Activated CD4-positive, alpha-beta T cell treated with anti-CD3 and anti-CD28 coated beads, Interleukin-2, amount 10 ng/mL, durations not matched to agents 24 days and 14 days (primary cell): ENCODE measurements at regions of chr13 and their contacts with region 1.

Region 1: DNA sequence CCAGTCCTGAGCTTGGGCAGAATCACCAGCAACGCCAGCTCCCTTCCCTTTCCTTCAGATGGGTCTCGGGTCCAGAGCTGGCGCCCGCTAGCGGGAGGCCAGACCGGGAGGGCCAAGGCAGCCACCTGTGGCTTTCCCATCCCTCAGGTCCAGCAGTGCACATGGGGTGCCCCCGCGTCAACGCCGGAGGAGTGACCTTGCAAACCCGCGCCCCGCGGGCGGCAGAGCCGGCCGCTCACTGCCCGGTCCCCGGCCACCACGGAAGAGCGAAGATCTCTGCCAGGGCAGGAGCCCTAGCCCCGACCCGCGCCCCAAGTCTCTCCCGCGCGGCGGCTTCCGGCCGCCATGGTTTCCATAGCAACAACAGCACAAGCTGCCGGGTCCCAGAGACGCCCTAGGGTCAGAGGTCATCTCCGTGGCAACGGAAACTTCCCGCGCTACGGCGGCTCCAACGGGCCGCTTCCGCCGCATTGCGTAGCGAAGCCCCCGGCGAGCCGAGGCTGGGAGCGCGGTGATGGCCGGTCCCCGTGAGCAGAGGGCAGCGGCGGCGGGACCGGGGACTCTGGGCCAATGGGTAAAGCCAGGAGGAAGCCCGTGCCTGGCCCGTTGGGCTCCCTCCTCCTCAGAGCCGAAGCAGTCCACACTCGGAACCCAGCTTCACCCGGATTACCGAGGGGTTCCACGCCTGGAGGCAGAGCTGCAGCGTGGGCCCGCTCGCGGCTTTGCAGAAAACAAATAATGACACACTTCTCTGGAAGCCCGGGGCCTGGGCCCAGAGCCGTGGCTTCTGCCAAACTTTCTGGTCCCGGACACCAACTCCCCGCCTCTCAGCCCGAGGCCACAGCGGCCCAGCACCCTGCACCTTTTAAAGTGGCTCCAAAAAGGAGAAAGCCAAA is 7.4 kb downstream of the FGF14 start:
- DNase-seq: peak; percentile 99
- H3K4me3 Mint-ChIP-seq: peak overlapping the region; percentile 85
- H3K27ac Mint-ChIP-seq: peak overlapping the region; percentile 91
- H3K4me1 Mint-ChIP-seq: peaks cover 18% of the 10 kb centered on the region
- H3K27me3 Mint-ChIP-seq: peaks cover 24% of the 10 kb centered on the region

Region 2: DNA sequence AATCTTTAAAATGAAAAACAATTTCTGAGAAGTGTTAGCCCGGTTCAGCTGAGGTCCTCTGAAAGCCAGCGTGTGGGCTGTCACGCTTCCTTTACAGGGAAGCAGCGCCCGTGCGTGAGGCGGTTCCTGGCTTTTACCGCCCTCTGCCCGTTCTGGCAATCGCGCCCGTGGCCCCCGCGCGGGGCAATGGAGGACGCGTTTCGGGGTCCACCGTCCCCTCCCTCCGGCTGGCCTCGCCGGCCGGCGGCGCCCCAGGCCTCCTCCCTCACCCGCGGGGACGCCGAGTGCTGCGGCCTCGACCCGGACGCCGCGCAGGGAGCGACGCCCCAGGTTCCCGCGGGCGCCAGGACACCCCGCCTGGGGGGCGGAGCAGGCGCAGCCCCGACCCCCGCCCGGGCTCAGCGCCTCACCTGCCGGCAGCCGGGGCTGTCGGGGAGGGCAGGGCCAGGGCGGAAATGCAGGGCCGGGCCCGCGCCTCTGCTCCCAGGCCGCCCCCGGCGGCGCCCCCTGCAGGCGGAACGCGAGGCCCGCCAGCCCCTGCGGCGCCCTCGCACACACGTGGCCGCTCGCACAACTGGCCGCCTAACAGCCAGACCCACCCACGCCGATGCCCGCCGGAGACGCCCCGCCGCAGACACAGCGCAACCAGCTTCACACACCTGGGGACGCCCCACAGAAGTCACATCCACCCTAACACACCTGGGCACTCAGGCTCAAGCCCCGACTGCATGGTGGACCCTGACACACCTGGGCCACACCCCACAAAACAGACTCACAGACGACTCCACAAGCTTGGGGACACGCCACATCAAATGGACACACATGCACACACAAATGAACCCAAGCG is 1805.9 kb before region 1 on chr13 and contains the start of gene GGACT:
- intact Hi-C with region 1: loop called (anchors 10 kb)
- DNase-seq: peak; percentile 95
- H3K4me3 Mint-ChIP-seq: peak within 1 kb of the TSS; percentile 84
- H3K27ac Mint-ChIP-seq: peak within 1 kb of the TSS; percentile 96
- H3K4me1 Mint-ChIP-seq: peaks cover 44% of the 10 kb centered on the region
- H3K27me3 Mint-ChIP-seq: no peaks in the 10 kb centered on the region
- total RNA-seq, gene GGACT: 4.4 and 5.9 TPM in 2 replicates

Region 3: DNA sequence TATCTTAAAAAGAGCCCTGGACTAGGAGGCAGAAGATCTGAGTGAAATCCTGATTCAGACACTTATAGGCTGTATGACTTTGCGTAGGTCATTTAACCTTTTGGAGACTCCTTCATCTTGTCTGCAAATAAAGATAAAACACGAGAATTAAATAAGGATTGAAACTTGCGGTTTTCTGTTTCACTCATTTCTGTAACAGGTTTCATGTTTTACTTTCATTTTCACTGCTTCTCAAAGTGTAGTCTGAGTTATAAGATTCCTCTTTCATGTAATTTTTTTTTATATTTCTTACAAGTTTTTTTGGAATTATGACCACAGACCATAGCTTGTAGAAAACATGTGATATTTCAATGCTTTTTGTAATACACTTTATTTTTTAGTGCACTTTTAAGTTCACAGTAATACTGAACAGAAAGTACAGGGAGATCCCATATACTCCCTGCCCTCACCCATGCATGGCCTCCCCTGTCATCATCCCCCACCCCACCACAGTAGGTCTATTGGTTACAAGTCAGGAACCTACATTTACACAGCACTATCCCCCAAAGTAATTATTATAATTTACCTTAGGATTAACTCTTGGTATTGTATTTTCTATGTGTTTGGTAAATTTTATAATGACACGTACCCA is 767.4 kb before region 1 on chr13:
- intact Hi-C with region 1: loop called (anchors 2 kb)
- DNase-seq: peak; percentile 75
- H3K4me3 Mint-ChIP-seq: peak overlapping the region; percentile 14
- H3K27ac Mint-ChIP-seq: peak overlapping the region; percentile 25
- H3K4me1 Mint-ChIP-seq: peaks cover 18% of the 10 kb centered on the region
- H3K27me3 Mint-ChIP-seq: peaks cover 21% of the 10 kb centered on the region

Region 4: GRCh38 chr13:102555917-102556553 is 161.6 kb after region 1 on chr13:
- intact Hi-C with region 1: loop called (anchors 10 kb)
- DNase-seq: peak; percentile 71
- H3K4me3 Mint-ChIP-seq: no peak overlapping the region
- H3K27ac Mint-ChIP-seq: no peak overlapping the region
- H3K4me1 Mint-ChIP-seq: no peaks in the 10 kb centered on the region
- H3K27me3 Mint-ChIP-seq: peaks cover 8% of the 10 kb centered on the region

Region 5: GRCh38 chr13:102773441-102774215 is 379.2 kb after region 1 on chr13 and contains the start of gene TEX30:
- intact Hi-C with region 1: loop called (anchors 10 kb)
- DNase-seq: peak; percentile 98
- H3K4me3 Mint-ChIP-seq: peak within 1 kb of the TSS; percentile 87
- H3K27ac Mint-ChIP-seq: peak within 1 kb of the TSS; percentile 93
- H3K4me1 Mint-ChIP-seq: peaks cover 49% of the 10 kb centered on the region
- H3K27me3 Mint-ChIP-seq: no peaks in the 10 kb centered on the region
- total RNA-seq, gene TEX30: 55.4 and 65.6 TPM in 2 replicates

Region 6: DNA sequence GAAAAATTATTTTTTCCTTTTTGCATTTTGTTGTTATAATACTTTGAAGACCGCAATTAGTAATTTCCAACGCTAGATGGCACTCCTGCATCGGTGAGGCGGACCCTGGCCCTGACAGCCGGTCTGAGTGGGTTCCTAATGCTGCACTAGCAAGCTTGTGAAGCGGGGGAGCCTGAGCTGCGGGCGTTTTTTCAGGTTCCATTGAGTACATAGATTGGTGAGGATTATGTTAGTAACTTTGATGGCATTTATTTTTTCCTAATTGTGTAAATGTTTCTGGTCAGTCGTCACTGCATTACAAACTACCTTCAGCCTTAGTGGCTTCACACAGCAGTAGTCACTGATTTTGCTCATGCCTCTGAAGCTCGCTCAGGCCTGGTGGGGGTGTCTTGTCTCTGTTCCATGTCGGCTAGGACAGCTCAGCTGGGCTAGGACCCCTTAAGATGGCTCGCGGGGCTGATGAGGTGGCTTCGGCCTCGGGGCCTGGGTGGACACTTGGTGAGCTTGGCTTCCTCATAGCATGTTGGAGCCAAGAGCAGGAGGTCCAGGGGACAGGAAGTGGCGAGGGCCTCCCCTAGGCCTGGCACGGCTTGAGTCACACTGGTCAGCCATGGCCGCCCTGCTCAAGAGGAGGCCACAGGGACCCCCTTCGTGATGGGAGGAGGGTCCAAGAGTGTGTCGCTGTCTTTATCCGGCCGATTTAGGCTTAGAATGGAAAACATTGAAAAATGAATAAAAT is 476.4 kb after region 1 on chr13:
- intact Hi-C with region 1: loop called (anchors 10 kb)
- DNase-seq: peak; percentile 81
- H3K4me3 Mint-ChIP-seq: no peak overlapping the region
- H3K27ac Mint-ChIP-seq: peak overlapping the region; percentile 68
- H3K4me1 Mint-ChIP-seq: peaks cover 22% of the 10 kb centered on the region
- H3K27me3 Mint-ChIP-seq: no peaks in the 10 kb centered on the region